GM13976 (cell line): ENCODE measurements at regions of chr15 and their contacts with region 1.

Region 1: DNA sequence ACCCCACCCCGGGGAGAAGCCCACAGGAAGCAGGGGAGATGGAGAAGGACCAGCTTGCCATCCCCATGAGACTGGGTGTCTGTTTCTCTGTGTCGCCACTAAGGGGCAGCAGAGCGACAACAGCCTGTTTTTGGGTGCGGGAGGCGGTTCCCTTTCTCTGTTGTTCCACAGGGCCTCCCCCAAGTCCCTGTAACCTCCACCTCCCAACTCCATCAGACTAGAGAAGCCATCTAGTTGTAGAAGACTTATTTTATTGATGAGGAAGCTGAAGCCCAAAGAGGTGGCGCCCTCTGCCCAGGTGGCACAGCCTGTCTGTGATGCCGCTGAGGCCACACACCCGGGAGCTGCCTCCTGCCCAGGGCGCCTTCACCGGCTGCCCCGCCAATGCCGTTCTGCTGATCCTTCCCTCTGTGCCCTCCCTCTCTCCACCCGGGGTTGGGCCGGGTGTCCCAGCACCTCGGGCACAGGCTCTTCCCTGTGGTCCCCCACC is 3.9 kb upstream of the CCDC9B start:
- DNase-seq: peak; percentile 89
- CTCF ChIP-seq: peak; percentile 79

Region 2: DNA sequence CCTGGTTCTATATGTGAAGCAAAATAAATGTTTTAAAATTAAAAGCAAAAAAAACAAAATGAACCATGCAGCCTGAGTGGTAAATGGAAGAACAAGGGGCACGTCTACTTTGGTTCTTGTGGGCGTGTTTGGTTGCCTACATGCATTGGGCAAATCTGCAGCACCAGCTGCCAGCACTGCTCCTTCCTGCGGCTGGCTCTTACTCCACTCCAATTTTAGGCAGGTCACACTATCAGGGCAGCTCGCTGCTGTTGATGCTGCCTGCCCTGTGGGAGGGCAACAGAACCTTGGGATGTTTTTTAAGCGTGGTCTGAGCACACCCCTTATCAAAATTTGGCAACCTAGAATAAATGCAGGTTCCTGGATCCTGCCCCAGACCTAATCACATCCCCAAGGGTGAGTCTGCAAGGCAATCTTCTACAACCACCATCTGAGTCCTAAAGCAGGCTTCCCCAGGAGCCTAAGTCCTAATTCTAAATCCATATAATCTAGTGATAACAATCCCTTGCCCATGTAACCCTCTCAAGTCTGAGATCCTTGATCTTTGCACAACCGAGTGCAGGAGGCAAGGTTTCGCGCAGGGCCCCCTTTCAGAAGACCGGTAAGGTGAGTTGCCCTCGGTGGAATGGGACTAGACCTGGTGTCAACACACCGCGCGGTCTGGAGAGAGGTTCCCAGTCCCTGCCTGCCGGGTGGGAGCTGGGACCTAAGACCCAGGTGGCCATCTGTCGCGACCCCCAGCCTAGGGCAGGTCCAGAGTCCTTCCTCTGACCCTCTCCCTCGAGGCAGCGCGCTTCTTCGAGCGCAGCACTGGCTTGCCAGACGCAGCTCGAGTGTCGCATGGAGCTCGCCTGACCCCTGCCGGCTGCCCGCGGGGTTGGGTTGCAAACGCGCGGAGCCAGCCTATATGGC is 76.8 kb after region 1 on chr15:
- in situ Hi-C with region 1: loop called (anchors 5 kb)
- DNase-seq: peak; percentile 93
- CTCF ChIP-seq: peak; percentile 95